Activated CD4-positive, alpha-beta memory T cell treated with anti-CD3 and anti-CD28 coated beads, Interleukin-2, amount 10 ng/mL, durations not matched to agents 7 days and 5 days (primary cell): ENCODE measurements at regions of chr1 and their contacts with region 1.

Region 1: DNA sequence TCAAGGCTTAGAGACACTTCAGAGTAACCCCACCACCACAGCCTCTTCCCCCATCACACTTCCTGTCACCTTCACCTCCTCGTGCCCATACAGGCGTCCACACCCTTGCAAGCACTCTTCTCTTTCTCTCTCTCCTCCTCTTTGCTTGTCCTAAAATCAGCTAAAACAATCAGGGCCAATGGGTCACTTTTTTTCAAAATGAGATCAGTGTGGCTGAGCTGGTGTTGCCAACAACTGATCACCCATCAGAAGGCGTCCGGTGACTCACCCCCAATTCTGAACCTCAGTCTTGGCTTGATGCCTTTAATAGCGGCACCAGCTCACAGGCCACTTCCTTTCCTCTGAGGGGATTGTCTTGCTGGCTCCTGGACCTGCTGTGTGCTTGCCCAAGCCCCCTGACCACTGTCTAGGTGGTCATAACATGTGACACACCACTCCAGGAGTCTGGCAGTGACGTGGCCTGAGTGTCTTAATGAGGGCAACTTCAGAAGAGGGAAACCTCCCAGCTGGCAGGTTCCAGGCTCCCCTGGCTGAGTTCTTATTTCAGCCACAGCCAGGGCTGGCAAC is 1.6 kb downstream of the DRAXIN start:
- DNase-seq: peak; percentile 72
- H3K4me3 Mint-ChIP-seq: peak overlapping the region; percentile 28
- H3K27ac Mint-ChIP-seq: peak overlapping the region; percentile 23
- H3K4me1 Mint-ChIP-seq: peaks cover 31% of the 10 kb centered on the region
- H3K27me3 Mint-ChIP-seq: peaks cover 49% of the 10 kb centered on the region

Region 2: GRCh38 chr1:11670747-11671146 is 22.4 kb before region 1 on chr1:
- CTCF ChIA-PET with region 1: no interaction called
- POLR2A ChIA-PET with region 1: interaction called, 18 read pairs
- DNase-seq: no peak
- H3K4me3 Mint-ChIP-seq: no peak overlapping the region
- H3K27ac Mint-ChIP-seq: no peak overlapping the region
- H3K4me1 Mint-ChIP-seq: peaks cover 18% of the 10 kb centered on the region
- H3K27me3 Mint-ChIP-seq: no peaks in the 10 kb centered on the region

Region 3: DNA sequence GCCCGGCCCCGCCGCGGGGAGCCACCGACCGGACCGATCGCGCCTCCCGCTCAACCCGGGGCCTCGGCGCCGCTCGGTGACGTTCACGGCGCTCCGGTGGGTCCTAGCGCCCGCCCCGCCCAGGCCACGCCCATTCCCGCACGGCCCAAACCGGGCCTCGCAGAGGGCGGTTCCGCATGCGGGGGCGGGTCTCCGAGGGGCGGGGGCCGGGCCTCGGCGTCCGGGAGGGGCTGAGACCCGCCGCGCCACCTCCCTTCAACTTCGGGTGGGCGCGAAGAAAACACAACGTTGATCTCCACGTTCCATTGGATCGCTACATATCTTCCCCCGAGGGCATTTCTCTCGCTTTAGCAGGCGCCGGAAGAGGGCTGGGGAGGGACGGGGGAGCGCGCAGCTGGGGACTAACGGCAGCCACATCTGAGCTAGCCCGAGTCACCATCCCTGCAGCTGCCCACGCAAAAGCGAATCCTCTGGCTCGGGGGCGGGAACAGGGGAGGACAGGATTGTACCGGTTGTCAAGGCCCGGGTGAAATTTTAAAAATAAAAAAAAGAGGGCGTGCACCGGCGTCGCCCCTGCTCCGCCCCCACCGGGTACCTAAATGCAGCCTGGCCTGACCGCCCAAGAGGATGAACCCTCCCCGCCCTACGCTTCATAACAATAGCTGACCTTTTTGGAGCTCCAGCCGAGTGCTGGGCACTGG is 11.9 kb before region 1 on chr1 and contains the start of gene MAD2L2:
- CTCF ChIA-PET with region 1: interaction called, 3 read pairs
- POLR2A ChIA-PET with region 1: interaction called, 14 read pairs
- DNase-seq: peak; percentile 91
- H3K4me3 Mint-ChIP-seq: peak within 1 kb of the TSS; percentile 83
- H3K27ac Mint-ChIP-seq: peak within 1 kb of the TSS; percentile 89
- H3K4me1 Mint-ChIP-seq: peaks cover 16% of the 10 kb centered on the region
- H3K27me3 Mint-ChIP-seq: peaks cover 15% of the 10 kb centered on the region
- total RNA-seq, gene MAD2L2: 59.2 to 63.1 TPM